Naive thymus-derived CD8-positive, alpha-beta T cell (primary cell): ENCODE measurements at regions of chr16 and their contacts with region 1.

Region 1: GRCh38 chr16:53435066-53435688 is 906 bp downstream of the RBL2 start:
- DNase-seq: peak; percentile 36 to 83 (median 67)
- ATAC-seq: peak; percentile 64 to 65
- H3K4me3 Mint-ChIP-seq: peak overlapping the region; percentile 92 to 99 (median 98)
- H3K27ac Mint-ChIP-seq: peak overlapping the region; percentile 95 to 99 (median 98)
- H3K4me1 Mint-ChIP-seq: peaks cover 12 to 50% (median 31%) of the 10 kb centered on the region in 4 donors
- H3K27me3 Mint-ChIP-seq: no peaks in the 10 kb centered on the region

Region 2: DNA sequence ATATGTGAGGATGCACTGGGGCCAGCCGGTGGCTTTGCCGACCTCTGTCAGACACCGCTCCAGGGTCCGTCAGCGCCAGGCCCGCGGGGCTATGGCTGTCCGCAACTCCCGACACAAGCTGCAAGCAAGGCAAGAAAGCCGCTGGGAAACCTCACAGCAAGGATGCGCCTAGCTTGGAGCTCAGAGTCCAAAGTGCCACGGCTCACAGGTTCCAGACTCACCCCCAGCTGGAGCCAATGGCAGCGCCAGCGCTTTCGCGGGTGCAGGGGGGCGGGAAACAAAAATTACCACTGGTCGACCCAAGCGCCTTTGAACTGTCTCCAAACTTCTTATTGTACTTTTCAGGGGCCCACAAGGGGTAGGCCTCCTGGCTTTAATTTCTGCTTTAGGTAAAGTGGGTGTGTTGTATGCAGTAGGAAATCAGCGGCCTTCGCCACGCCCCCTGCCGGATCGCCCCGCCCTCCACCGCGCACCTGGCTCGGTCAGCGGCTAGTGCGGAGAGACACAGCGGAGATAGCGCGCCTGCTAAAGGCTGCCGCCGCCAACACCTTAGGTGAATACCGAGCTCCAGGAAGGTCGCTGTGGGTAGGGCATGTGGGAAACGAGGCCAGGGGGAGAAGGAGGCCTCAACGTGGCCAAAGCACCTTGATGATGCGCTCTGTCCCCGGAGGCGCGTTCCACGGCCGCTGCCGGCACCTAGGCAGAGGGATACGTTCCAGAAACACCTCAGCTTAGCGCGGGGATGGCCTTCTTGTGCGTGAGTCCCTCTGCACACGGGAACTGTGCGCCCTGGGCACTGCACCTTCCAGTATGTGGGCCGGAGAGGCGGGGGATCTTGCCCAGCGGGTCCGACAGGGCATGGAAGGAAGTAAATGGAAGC is 61.9 kb before region 1 on chr16:
- POLR2A ChIA-PET with region 1: interaction called, 24 read pairs
- DNase-seq: peak; percentile 64 to 90 (median 82)
- ATAC-seq: peak; percentile 93 to 94
- H3K4me3 Mint-ChIP-seq: no peak overlapping the region
- H3K27ac Mint-ChIP-seq: peak overlapping the region in 5 of 10 donors; percentile 72 to 92 (median 79)
- H3K4me1 Mint-ChIP-seq: peaks cover 12 to 36% (median 29%) of the 10 kb centered on the region in 4 donors
- H3K27me3 Mint-ChIP-seq: peaks cover 0 to 13% (median 0%) of the 10 kb centered on the region in 5 donors

Region 3: GRCh38 chr16:53412549-53412948 is 22.6 kb before region 1 on chr16:
- POLR2A ChIA-PET with region 1: interaction called, 10 read pairs
- DNase-seq: peak in 1 of 10 donors; percentile 45
- ATAC-seq: no peak
- H3K4me3 Mint-ChIP-seq: no peak overlapping the region
- H3K27ac Mint-ChIP-seq: no peak overlapping the region
- H3K4me1 Mint-ChIP-seq: peaks cover 2 to 10% (median 7%) of the 10 kb centered on the region in 4 donors
- H3K27me3 Mint-ChIP-seq: no peaks in the 10 kb centered on the region

Region 4: GRCh38 chr16:53465606-53466280 is 30.6 kb after region 1 on chr16:
- POLR2A ChIA-PET with region 1: interaction called, 564 read pairs
- DNase-seq: no peak
- ATAC-seq: no peak
- H3K4me3 Mint-ChIP-seq: peak overlapping the region in 6 of 10 donors; percentile 9 to 79 (median 68)
- H3K27ac Mint-ChIP-seq: peak overlapping the region in 9 of 10 donors; percentile 6 to 92 (median 87)
- H3K4me1 Mint-ChIP-seq: peaks cover 13 to 67% (median 52%) of the 10 kb centered on the region in 4 donors
- H3K27me3 Mint-ChIP-seq: no peaks in the 10 kb centered on the region

Region 5: GRCh38 chr16:53482123-53482522 is 46.9 kb after region 1 on chr16:
- POLR2A ChIA-PET with region 1: interaction called, 46 read pairs
- DNase-seq: no peak
- ATAC-seq: no peak
- H3K4me3 Mint-ChIP-seq: no peak overlapping the region
- H3K27ac Mint-ChIP-seq: peak overlapping the region; percentile 36 to 91 (median 64)
- H3K4me1 Mint-ChIP-seq: peaks cover 17 to 47% (median 35%) of the 10 kb centered on the region in 4 donors
- H3K27me3 Mint-ChIP-seq: no peaks in the 10 kb centered on the region